PC-9 (cell line): ENCODE measurements at regions of chr19 and their contacts with region 1.

Region 1: GRCh38 chr19:13466697-13467096 is 39.6 kb downstream of the CACNA1A start:
- DNase-seq: no peak
- H3K4me3 ChIP-seq: no peak overlapping the region
- H3K27ac ChIP-seq: no peak overlapping the region
- H3K4me1 ChIP-seq: no peaks in the 10 kb centered on the region
- H3K27me3 ChIP-seq: peaks cover 48% of the 10 kb centered on the region
- CTCF ChIP-seq: no peak

Region 2: DNA sequence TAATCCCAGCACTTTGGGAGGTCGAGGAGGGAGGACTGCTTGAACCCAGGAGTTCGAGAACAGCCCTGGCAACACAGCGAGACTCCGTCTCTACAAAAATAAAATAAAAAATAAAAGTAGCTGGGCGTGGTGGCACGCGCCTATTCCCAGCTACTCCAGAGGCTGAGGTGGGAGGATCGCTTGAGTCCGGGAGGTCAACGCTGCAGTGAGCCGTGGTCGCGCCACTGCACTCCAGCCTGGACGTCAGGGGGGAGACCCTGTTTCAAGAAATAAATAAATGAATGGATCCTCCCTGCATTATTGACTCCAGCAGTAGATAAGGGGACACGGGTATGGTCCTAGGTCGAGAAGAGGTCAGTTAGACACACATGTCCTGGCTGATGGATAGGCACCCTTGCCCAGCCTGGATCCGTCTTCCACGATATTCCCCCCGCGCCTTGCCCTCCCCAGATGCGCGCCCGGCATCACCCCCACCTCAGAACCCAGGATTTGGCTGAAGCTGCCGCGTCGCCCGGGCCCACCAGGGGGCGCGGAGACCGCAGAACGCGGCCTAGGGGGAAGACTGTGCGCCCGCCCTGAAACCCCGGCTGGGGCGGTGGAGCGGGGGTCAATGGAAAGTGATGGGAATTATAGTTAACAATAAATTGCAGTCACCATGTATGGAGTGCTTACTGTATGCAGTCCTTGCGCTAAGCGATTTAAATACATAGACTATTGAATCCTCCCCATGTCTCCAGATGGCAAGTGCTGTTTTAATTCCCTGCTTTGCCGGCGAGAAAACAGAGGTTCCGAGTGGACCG is 689.3 kb before region 1 on chr19:
- CTCF ChIA-PET with region 1: no interaction called
- POLR2A ChIA-PET with region 1: no interaction called
- intact Hi-C with region 1: no loop called
- DNase-seq: peak; percentile 63 to 85
- H3K4me3 ChIP-seq: peak overlapping the region; percentile 59
- H3K27ac ChIP-seq: peak overlapping the region; percentile 51
- H3K4me1 ChIP-seq: peaks cover 54% of the 10 kb centered on the region
- H3K27me3 ChIP-seq: no peaks in the 10 kb centered on the region
- CTCF ChIP-seq: peak; percentile 99

Region 3: GRCh38 chr19:13652810-13653590 is 186.3 kb after region 1 on chr19:
- CTCF ChIA-PET with region 1: no interaction called
- POLR2A ChIA-PET with region 1: no interaction called
- intact Hi-C with region 1: no loop called
- DNase-seq: no peak
- H3K4me3 ChIP-seq: no peak overlapping the region
- H3K27ac ChIP-seq: no peak overlapping the region
- H3K4me1 ChIP-seq: no peaks in the 10 kb centered on the region
- H3K27me3 ChIP-seq: peaks cover 92% of the 10 kb centered on the region
- CTCF ChIP-seq: no peak

Region 4: GRCh38 chr19:13846557-13847406 is 380.1 kb after region 1 on chr19:
- CTCF ChIA-PET with region 1: interaction called, 10 read pairs
- POLR2A ChIA-PET with region 1: no interaction called
- intact Hi-C with region 1: no loop called
- DNase-seq: peak; percentile 93 to 97
- H3K4me3 ChIP-seq: peak overlapping the region; percentile 77
- H3K27ac ChIP-seq: peak overlapping the region; percentile 97
- H3K4me1 ChIP-seq: peaks cover 70% of the 10 kb centered on the region
- H3K27me3 ChIP-seq: no peaks in the 10 kb centered on the region
- CTCF ChIP-seq: no peak